CD4-positive, alpha-beta memory T cell (primary cell): ENCODE measurements at regions of chr19 and their contacts with region 1.

Region 1: DNA sequence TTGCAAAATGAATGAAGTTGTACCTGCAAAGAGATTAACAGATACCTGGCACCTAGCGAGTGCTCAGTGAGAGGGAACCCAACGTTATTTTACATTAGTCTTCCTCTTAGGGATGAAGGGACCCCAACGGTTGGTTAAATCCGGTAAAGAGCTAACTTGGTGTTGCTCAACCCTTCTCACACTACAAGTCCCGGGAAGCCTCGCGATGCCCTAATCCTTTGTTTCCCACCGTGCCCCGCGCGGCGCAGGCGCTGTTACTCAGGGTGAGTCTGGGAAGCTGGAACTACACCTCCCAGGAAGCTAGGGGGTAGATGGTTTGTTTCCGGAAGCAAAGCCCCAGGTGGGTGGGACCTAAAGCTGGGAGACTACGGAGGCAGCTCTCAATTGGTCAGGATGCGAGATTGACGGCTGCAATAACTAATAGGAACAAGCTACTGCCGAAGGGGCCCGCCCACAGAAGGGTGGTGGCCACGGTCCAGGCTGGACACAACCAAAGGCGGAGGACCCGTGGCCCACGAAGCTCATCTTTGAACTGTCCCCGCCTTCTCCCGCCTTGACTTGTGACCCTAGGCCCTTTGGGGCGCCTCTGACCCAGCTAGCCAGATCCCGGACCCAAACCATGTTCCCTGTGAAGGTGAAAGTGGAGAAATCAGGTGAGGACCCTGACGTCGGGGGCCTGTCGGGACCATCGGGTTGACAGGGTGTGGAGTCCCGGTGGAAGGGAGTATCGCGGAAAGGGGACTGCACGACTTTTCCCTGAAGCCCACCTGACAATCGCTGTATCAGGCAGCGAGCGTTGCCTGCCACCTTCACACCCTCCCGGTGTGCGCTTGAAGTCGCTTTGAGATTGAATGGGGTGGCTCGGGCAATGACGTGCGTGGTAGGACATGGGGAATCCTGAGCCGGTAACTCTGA is at the start of gene LIN37:
- DNase-seq: peak; percentile 98 to 100 (median 99)
- H3K4me3 ChIP-seq: peak within 1 kb of the TSS; percentile 63 to 93
- H3K4me3 Mint-ChIP-seq: peak within 1 kb of the TSS; percentile 97 to 99 (median 98)
- H3K27ac ChIP-seq: peak within 1 kb of the TSS; percentile 82
- H3K27ac Mint-ChIP-seq: peak within 1 kb of the TSS; percentile 88 to 98 (median 97)
- H3K4me1 ChIP-seq: peaks cover 42% of the 10 kb centered on the region
- H3K4me1 Mint-ChIP-seq: peaks cover 25 to 49% (median 39%) of the 10 kb centered on the region in 4 donors
- H3K27me3 ChIP-seq: no peaks in the 10 kb centered on the region
- H3K27me3 Mint-ChIP-seq: no peaks in the 10 kb centered on the region
- total RNA-seq, gene LIN37: 26.3 to 29.4 TPM

Region 2: DNA sequence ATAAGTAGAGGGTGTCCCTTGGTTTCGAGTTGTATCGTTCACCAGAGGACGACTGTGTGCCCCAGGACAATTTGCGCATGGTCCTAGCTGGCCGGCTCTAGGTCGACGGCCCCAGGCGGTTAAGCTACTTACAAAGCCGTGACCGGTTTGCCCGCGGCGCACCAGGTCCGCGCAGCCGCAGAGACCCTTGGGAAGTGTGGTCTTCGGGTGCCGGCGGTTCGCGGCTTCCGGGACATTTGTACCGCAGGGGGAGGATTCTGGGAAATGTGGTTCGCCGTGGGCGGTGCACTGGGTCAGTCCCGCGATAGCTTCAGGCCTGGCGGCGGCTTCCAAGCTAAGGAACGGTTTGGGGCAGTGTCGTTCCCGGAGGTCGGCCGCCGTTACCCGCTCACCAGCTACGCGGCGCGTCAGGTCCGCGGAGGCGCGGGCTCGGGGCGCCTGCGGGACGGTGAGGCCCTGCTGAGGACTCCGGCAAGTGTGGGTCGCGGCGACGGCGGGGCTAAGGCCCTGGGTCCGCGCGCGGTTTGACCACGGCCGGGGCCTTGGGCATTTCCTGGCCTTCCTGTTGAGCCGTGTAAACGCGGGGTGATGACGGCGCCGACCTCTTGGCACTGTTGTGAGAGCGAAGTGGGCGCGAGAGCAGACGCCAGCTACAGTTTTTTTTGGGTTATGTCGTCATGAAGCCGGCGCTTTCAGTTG is 1070.8 kb before region 1 on chr19 and contains the start of gene ZNF302:
- CTCF ChIA-PET with region 1: no interaction called
- POLR2A ChIA-PET with region 1: no interaction called
- intact Hi-C with region 1: loop called (anchors 5 kb)
- DNase-seq: peak; percentile 93 to 95 (median 94)
- H3K4me3 ChIP-seq: peak within 1 kb of the TSS; percentile 73 to 94
- H3K4me3 Mint-ChIP-seq: peak within 1 kb of the TSS; percentile 95 to 100 (median 99)
- H3K27ac ChIP-seq: peak within 1 kb of the TSS; percentile 89
- H3K27ac Mint-ChIP-seq: peak within 1 kb of the TSS; percentile 97 to 100 (median 99)
- H3K4me1 ChIP-seq: peaks cover 21% of the 10 kb centered on the region
- H3K4me1 Mint-ChIP-seq: peaks cover 18 to 41% (median 23%) of the 10 kb centered on the region in 4 donors
- H3K27me3 ChIP-seq: no peaks in the 10 kb centered on the region
- H3K27me3 Mint-ChIP-seq: peaks cover 0 to 6% of the 10 kb centered on the region in 2 donors
- total RNA-seq, gene ZNF302: 50.8 to 53.3 TPM

Region 3: DNA sequence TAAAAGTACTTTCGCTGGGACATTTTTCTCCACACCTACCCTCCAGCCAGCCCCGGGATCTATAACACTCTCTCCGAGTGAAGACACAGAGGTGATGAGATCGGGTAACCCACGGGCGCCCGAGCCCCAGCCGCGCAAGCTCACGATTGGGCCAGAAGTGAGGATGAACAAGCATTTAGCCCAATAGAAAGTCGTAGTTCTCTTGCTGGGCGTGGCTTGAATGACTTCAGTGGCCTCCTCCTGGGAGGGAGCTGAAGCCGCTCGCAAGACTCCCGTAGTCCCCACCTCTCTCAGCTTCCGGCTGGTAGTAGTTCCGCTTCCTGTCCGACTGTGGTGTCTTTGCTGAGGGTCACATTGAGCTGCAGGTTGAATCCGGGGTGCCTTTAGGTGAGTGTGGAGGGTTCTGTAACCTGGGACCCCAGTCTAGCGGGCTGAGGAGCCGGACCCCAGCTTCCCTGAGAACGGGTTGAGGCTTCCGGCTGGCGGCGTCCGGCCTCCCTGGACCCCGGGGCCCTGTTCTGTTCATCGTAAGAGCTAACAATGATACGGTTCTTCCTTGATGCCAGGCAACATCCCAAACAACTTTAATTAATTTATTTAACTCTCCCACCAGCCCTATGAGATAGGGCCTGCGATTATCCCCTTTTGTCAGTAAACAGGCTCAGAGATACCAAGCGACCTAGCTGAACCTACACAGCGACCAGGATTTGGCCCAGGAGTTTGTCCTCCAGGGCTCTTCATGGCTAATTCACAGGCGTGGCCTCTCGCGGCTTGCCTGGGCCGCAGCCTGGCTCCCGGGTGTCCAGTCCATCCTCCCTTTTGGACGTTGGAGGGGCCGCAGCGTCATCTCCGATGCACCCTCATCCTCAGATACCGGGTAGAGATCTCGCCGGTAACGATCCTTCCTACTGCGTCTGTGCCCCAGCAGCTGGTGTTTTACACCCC is 100.1 kb before region 1 on chr19 and contains the start of gene COX6B1:
- CTCF ChIA-PET with region 1: interaction called, 3 read pairs
- POLR2A ChIA-PET with region 1: interaction called, 11 read pairs
- intact Hi-C with region 1: loop called (anchors 2 kb)
- DNase-seq: peak; percentile 90 to 98 (median 93)
- H3K4me3 ChIP-seq: peak within 1 kb of the TSS; percentile 72 to 93
- H3K4me3 Mint-ChIP-seq: peak within 1 kb of the TSS; percentile 93 to 99 (median 98)
- H3K27ac ChIP-seq: peak within 1 kb of the TSS; percentile 86
- H3K27ac Mint-ChIP-seq: peak within 1 kb of the TSS; percentile 95 to 99 (median 97)
- H3K4me1 ChIP-seq: peaks cover 41% of the 10 kb centered on the region
- H3K4me1 Mint-ChIP-seq: peaks cover 28 to 52% (median 41%) of the 10 kb centered on the region in 4 donors
- H3K27me3 ChIP-seq: no peaks in the 10 kb centered on the region
- H3K27me3 Mint-ChIP-seq: no peaks in the 10 kb centered on the region
- total RNA-seq, gene COX6B1: 212 to 250 TPM

Region 4: DNA sequence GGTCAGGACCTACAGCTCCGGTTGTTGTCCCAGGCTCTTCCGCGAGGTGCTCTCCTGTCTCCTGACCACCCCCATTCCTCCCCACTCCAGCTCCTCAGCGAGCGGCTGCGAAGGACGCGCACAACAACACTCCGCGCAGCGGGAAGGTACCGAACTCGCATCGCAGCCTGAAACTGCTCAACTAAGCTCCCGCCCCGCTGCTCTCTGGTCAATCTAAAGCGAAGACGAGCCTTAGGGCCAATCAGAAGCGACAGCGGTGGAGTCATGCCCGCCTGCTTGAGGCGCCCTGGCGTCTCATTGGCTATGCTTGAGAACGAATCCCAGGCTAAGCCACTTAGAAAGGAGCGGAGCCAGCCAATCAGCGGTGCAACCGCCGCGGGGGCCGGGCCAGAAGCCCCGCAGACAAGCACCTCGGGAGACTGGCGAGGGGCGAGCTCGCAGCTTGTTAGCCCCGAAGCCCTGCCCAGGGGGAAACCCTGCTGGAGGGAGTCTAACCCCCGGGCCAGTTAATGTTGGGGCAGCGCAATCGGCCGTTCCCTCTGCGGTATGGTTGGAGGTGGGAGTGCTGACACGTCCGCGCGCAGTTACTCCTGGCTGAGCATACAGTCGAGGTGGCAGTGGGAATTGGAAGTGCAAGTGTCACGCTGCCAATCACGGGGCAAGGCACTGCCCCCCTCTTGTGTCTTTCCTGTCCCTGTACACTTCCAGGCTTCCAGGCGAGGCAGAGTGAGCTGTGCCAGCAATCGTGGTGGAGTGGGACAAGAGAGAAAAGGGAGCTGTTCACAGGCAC is 45.9 kb before region 1 on chr19:
- CTCF ChIA-PET with region 1: interaction called, 3 read pairs
- POLR2A ChIA-PET with region 1: interaction called, 26 read pairs
- intact Hi-C with region 1: loop called (anchors 1 kb)
- DNase-seq: peak; percentile 88 to 97 (median 91)
- H3K4me3 ChIP-seq: peak overlapping the region; percentile 92 to 95
- H3K4me3 Mint-ChIP-seq: peak overlapping the region; percentile 90 to 100 (median 98)
- H3K27ac ChIP-seq: peak overlapping the region; percentile 39
- H3K27ac Mint-ChIP-seq: peak overlapping the region; percentile 90 to 98 (median 95)
- H3K4me1 ChIP-seq: peaks cover 11% of the 10 kb centered on the region
- H3K4me1 Mint-ChIP-seq: peaks cover 3 to 9% (median 7%) of the 10 kb centered on the region in 4 donors
- H3K27me3 ChIP-seq: no peaks in the 10 kb centered on the region
- H3K27me3 Mint-ChIP-seq: peaks cover 2 to 5% of the 10 kb centered on the region in 2 donors

Region 5: GRCh38 chr19:35790981-35791813 is 42.8 kb after region 1 on chr19:
- CTCF ChIA-PET with region 1: no interaction called
- POLR2A ChIA-PET with region 1: no interaction called
- intact Hi-C with region 1: no loop called
- DNase-seq: peak in 1 of 5 donors; percentile 9
- H3K4me3 ChIP-seq: no peak overlapping the region
- H3K4me3 Mint-ChIP-seq: no peak overlapping the region
- H3K27ac ChIP-seq: no peak overlapping the region
- H3K27ac Mint-ChIP-seq: no peak overlapping the region
- H3K4me1 ChIP-seq: no peaks in the 10 kb centered on the region
- H3K4me1 Mint-ChIP-seq: no peaks in the 10 kb centered on the region
- H3K27me3 ChIP-seq: no peaks in the 10 kb centered on the region
- H3K27me3 Mint-ChIP-seq: peaks cover 8 to 9% of the 10 kb centered on the region in 2 donors

Region 6: GRCh38 chr19:35899547-35900214 is 151.3 kb after region 1 on chr19:
- CTCF ChIA-PET with region 1: no interaction called
- POLR2A ChIA-PET with region 1: interaction called, 9 read pairs
- intact Hi-C with region 1: loop called (anchors 2 kb)
- DNase-seq: peak; percentile 86 to 94 (median 88)
- H3K4me3 ChIP-seq: peak overlapping the region; percentile 52 to 96
- H3K4me3 Mint-ChIP-seq: peak overlapping the region; percentile 94 to 100 (median 98)
- H3K27ac ChIP-seq: peak overlapping the region; percentile 100
- H3K27ac Mint-ChIP-seq: peak overlapping the region; percentile 92 to 99 (median 98)
- H3K4me1 ChIP-seq: peaks cover 67% of the 10 kb centered on the region
- H3K4me1 Mint-ChIP-seq: peaks cover 23 to 73% (median 53%) of the 10 kb centered on the region in 4 donors
- H3K27me3 ChIP-seq: no peaks in the 10 kb centered on the region
- H3K27me3 Mint-ChIP-seq: no peaks in the 10 kb centered on the region

Region 7: DNA sequence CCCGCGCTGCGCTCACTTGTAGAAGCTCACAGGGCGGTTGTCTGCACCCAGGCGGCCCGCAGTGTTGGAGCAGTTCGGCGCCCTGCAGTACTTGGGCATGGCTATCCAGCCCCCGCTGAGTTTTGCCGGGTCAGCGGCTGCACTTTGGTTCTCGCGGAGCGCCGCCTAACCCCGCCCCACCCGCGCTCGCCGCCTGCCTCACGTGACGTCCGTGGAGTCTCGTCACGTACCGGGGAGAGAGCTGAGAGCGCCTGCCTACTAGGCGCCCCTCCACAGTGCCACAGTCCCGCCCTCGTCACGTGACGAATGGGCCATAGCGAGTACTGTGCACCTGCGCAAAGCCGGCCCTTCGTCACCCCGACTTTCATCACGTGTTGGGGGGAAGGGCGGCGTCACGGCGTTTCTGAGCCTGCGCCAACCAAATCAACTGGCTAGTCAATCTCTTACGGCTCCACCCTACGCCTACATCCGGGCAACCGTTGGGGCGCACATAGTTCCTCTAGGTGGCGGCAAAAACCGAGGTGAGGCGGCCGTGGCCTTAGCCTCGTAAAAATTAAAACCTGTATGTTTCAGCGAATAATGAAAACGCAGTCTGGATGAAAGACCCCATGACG is 305.9 kb after region 1 on chr19 and contains the start of gene THAP8:
- CTCF ChIA-PET with region 1: no interaction called
- POLR2A ChIA-PET with region 1: interaction called, 3 read pairs
- intact Hi-C with region 1: loop called (anchors 1 kb)
- DNase-seq: peak; percentile 99 to 100 (median 100)
- H3K4me3 ChIP-seq: peak within 1 kb of the TSS; percentile 79 to 93
- H3K4me3 Mint-ChIP-seq: peak within 1 kb of the TSS; percentile 96 to 100 (median 99)
- H3K27ac ChIP-seq: peak within 1 kb of the TSS; percentile 78
- H3K27ac Mint-ChIP-seq: peak within 1 kb of the TSS; percentile 98 to 99 (median 98)
- H3K4me1 ChIP-seq: peaks cover 11% of the 10 kb centered on the region
- H3K4me1 Mint-ChIP-seq: peaks cover 16 to 41% (median 21%) of the 10 kb centered on the region in 4 donors
- H3K27me3 ChIP-seq: no peaks in the 10 kb centered on the region
- H3K27me3 Mint-ChIP-seq: no peaks in the 10 kb centered on the region
- total RNA-seq, gene THAP8: 5.1 to 7.0 TPM